B cell (primary cell): ENCODE measurements at regions of chrX and their contacts with region 1.

Region 1: GRCh38 chrX:53433651-53434639 is at the start of gene HSD17B10:
- DNase-seq: peak; percentile 87
- ATAC-seq: peak; percentile 99
- H3K4me3 ChIP-seq: peak within 1 kb of the TSS; percentile 41 to 77 (median 70)
- H3K4me3 Mint-ChIP-seq: peak within 1 kb of the TSS; percentile 99
- H3K27ac ChIP-seq: peak within 1 kb of the TSS; percentile 74 to 88
- H3K27ac Mint-ChIP-seq: peak within 1 kb of the TSS; percentile 96
- H3K4me1 ChIP-seq: peaks cover 11 to 16% of the 10 kb centered on the region in 2 donors
- H3K4me1 Mint-ChIP-seq: peaks cover 16% of the 10 kb centered on the region
- H3K27me3 ChIP-seq: peaks cover 0 to 5% (median 1%) of the 10 kb centered on the region in 4 experiments
- H3K27me3 Mint-ChIP-seq: peaks cover 7% of the 10 kb centered on the region
- CTCF ChIP-seq: no peak
- total RNA-seq, gene HSD17B10: 48.2 and 49.7 TPM in 2 replicates

Region 2: GRCh38 chrX:53224860-53225797 is 208.8 kb before region 1 on chrX and contains the start of gene KDM5C:
- CTCF ChIA-PET with region 1: no interaction called
- POLR2A ChIA-PET with region 1: no interaction called
- intact Hi-C with region 1: loop called (anchors 10 kb)
- DNase-seq: peak; percentile 93
- ATAC-seq: peak; percentile 88
- H3K4me3 ChIP-seq: peak within 1 kb of the TSS; percentile 65 to 100 (median 96)
- H3K4me3 Mint-ChIP-seq: peak within 1 kb of the TSS; percentile 96
- H3K27ac ChIP-seq: peak within 1 kb of the TSS; percentile 86 to 97
- H3K27ac Mint-ChIP-seq: peak within 1 kb of the TSS; percentile 98
- H3K4me1 ChIP-seq: peaks cover 31 to 34% of the 10 kb centered on the region in 2 donors
- H3K4me1 Mint-ChIP-seq: peaks cover 32% of the 10 kb centered on the region
- H3K27me3 ChIP-seq: no peaks in the 10 kb centered on the region
- H3K27me3 Mint-ChIP-seq: no peaks in the 10 kb centered on the region
- CTCF ChIP-seq: no peak
- total RNA-seq, gene KDM5C: 138 and 157 TPM in 2 replicates

Region 3: DNA sequence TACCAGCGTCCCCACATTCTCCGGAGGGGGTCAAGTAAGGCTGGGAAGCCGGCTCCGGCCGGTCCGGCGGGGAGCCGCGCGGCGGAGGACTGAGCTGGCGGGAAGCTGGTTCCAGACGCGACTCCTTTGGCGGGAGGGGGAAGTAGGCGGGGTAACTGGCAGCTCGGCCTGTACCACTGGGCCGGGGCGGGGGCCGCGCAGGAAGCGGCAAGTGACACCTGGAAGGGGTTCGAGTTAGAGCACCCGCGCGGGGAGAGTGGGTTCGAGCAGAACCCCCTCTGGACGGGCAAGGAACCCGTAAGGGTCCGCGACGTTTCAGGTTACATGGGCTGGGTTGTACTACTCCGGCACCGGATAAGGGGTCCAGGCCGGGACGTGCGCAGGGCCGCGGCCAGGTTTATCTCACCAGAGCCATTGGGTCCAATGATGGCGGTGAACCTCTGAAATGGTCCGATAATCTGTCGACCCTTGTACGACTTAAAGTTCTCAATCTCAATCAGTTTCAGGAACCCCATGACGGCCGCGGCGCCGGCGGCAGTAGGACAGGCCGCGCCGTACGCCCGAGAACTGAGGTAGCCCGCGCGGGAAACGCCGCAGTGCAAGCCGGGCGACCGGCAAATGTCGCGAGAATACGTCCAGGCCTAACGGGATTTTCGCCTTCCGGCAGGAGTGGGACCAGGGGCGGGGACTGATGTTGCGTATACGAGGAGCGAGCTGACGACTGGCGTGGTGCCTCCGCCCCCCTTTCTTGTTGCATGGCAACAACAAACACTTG is 11.7 kb before region 1 on chrX and contains the start of gene SMC1A:
- CTCF ChIA-PET with region 1: interaction called, 13 read pairs
- POLR2A ChIA-PET with region 1: interaction called, 7 read pairs
- intact Hi-C with region 1: loop called (anchors 1 kb)
- DNase-seq: peak; percentile 96
- ATAC-seq: peak; percentile 91
- H3K4me3 ChIP-seq: peak within 1 kb of the TSS; percentile 43 to 95 (median 93)
- H3K4me3 Mint-ChIP-seq: peak within 1 kb of the TSS; percentile 87
- H3K27ac ChIP-seq: peak within 1 kb of the TSS; percentile 96 to 98
- H3K27ac Mint-ChIP-seq: peak within 1 kb of the TSS; percentile 94
- H3K4me1 ChIP-seq: peaks cover 17 to 23% of the 10 kb centered on the region in 2 donors
- H3K4me1 Mint-ChIP-seq: peaks cover 31% of the 10 kb centered on the region
- H3K27me3 ChIP-seq: no peaks in the 10 kb centered on the region
- H3K27me3 Mint-ChIP-seq: no peaks in the 10 kb centered on the region
- CTCF ChIP-seq: no peak
- total RNA-seq, gene SMC1A: 67.6 and 70.0 TPM in 2 replicates